ENCODE measurements at regions of chr1 and their contacts with region 1.

Region 1: DNA sequence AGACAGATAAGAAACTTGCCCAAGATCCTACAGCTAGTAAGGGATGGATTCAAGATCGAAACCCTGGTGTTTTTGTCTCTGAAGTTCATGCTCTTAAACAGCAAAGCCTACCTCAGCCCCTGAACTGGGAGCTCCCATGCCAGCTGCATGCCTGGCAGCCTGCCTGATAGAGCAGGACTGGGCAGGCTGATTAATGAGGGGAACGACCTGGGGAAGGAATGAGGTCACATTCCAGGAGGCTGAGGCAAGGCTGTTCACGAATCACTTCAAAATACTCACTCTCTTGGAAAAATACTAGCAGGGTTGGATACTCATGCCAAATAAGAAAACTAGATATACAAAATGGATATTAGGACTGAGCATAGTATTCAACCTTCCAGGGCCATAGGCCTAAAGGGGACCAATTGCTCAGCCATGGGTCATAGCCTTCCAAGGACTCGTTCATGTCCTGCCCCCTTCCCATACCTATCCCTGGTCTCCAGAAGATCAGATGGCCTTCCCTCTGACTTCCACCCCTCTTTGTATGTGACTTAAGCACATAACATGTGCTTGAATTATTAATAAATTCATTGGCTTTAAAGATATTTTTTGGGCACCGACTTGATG is 15.6 kb upstream of the TACSTD2 start:
- DNase-seq: no peak
- H3K4me3 ChIP-seq: no peak overlapping the region
- H3K27ac ChIP-seq: no peak overlapping the region
- H3K27me3 ChIP-seq: no peaks in the 10 kb centered on the region
- CTCF ChIP-seq: no peak

Region 2: DNA sequence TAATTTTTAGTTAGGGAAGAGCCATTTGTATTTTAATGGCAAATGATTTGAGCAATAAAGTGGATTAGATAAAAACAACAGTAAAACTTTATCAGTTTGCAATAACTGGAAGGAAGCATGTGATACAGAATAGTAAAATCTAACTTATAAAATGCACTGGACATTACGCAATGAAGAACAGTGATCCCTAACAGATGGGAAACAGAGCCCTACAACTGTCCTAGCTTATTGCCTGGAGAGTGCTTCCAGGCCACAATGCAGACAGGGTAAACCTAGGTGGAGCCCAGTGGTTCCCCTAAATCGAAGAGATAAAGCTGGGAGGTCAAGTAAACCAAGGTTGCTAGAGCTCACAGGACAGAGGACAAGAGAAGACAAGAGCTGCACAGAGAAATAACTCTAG is 53.1 kb before region 1 on chr1:
- intact Hi-C with region 1: loop called in 1 of 2 experiments (anchors 10 kb)
- DNase-seq: no peak
- H3K4me3 ChIP-seq: no peak overlapping the region
- H3K27ac ChIP-seq: no peak overlapping the region
- H3K27me3 ChIP-seq: no peaks in the 10 kb centered on the region
- CTCF ChIP-seq: no peak

Region 3: GRCh38 chr1:58652651-58653184 is 60.1 kb after region 1 on chr1:
- intact Hi-C with region 1: loop called in 1 of 2 experiments (anchors 5 kb)
- DNase-seq: peak in 9 of 10 donors; percentile 41 to 82 (median 53)
- H3K4me3 ChIP-seq: no peak overlapping the region
- H3K27ac ChIP-seq: peak overlapping the region in 8 of 59 donors; percentile 9 to 37 (median 22)
- H3K27me3 ChIP-seq: no peaks in the 10 kb centered on the region
- CTCF ChIP-seq: peak; percentile 76 to 98 (median 92)

Region 4: DNA sequence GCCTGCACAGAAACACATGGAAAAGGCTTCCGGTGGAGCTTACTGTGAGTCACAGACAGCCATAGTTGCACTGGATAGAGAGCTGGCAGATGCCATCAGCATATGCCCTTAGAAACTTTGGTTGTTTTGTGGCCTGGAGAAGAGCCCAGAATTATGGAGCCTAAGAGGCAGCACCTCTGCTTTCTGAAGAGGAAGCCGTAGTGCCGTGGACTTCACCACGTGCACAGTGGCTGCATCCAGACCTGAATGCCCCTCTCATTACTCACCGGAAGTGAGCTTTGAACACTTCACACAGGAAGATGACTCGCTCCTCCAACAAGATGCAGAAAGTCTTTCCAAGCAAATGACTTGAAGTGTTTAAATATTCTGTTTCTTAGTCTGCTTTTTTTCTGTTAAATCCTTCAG is 162.8 kb after region 1 on chr1:
- intact Hi-C with region 1: no loop called
- DNase-seq: peak in 7 of 10 donors; percentile 29 to 66 (median 55)
- H3K4me3 ChIP-seq: no peak overlapping the region
- H3K27ac ChIP-seq: peak overlapping the region in 26 of 59 donors; percentile 1 to 71 (median 32)
- H3K27me3 ChIP-seq: no peaks in the 10 kb centered on the region
- CTCF ChIP-seq: no peak